ENCODE measurements at regions of chr22 and their contacts with region 1.

Region 1: DNA sequence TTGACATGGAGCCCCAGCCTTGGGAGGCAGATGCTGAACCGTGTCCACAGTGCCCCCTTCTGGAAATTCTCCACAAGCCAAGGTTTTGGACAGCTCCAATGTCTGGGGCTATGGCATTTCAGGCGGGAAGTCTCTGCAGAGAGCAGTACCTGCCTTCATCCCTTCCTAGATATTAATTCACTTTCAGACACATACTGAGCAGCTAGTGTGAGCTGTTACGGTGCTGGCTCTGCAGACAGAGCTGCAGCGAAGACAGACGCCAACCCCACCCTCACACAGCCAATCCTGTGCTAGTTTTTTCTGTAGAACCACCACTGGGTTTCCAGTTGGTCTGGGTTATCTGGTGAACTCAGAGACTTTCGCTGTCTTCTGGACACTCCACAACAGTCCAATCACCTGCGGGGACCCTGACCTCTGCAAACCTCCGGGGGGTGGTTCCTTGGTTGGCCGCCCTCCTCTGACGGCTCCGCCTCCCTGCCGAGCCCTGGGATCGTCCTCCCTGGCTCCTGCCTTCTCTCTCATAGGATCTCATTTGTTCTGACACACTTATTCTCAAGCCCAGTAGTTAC is 9.1 kb downstream of the LMF2 start:
- DNase-seq: peak; percentile 80
- ATAC-seq: peak; percentile 94
- H3K4me3 ChIP-seq: no peak overlapping the region
- H3K4me3 Mint-ChIP-seq: no peak overlapping the region
- H3K27ac ChIP-seq: no peak overlapping the region
- H3K27ac Mint-ChIP-seq: no peak overlapping the region
- H3K4me1 ChIP-seq: peaks cover 3 to 10% of the 10 kb centered on the region in 2 donors
- H3K4me1 Mint-ChIP-seq: peaks cover 4% of the 10 kb centered on the region
- H3K27me3 ChIP-seq: no peaks in the 10 kb centered on the region
- H3K27me3 Mint-ChIP-seq: no peaks in the 10 kb centered on the region
- CTCF ChIP-seq: peak; percentile 73

Region 2: GRCh38 chr22:50236731-50237409 is 261.5 kb before region 1 on chr22:
- CTCF ChIA-PET with region 1: interaction called, 21 read pairs
- POLR2A ChIA-PET with region 1: interaction called, 11 read pairs
- intact Hi-C with region 1: loop called (anchors 1 kb)
- DNase-seq: no peak
- ATAC-seq: no peak
- H3K4me3 ChIP-seq: no peak overlapping the region
- H3K4me3 Mint-ChIP-seq: no peak overlapping the region
- H3K27ac ChIP-seq: no peak overlapping the region
- H3K27ac Mint-ChIP-seq: no peak overlapping the region
- H3K4me1 ChIP-seq: peaks cover 6 to 11% of the 10 kb centered on the region in 2 donors
- H3K4me1 Mint-ChIP-seq: peaks cover 18% of the 10 kb centered on the region
- H3K27me3 ChIP-seq: no peaks in the 10 kb centered on the region
- H3K27me3 Mint-ChIP-seq: no peaks in the 10 kb centered on the region
- CTCF ChIP-seq: peak; percentile 51

Region 3: GRCh38 chr22:50250555-50251476 is 247.6 kb before region 1 on chr22 and contains the start of gene HDAC10:
- CTCF ChIA-PET with region 1: interaction called, 26 read pairs
- POLR2A ChIA-PET with region 1: interaction called, 3 read pairs
- intact Hi-C with region 1: loop called (anchors 1 kb)
- DNase-seq: peak; percentile 85
- ATAC-seq: peak; percentile 84
- H3K4me3 ChIP-seq: peak within 1 kb of the TSS; percentile 56 to 81 (median 79)
- H3K4me3 Mint-ChIP-seq: peak within 1 kb of the TSS; percentile 86
- H3K27ac ChIP-seq: peak within 1 kb of the TSS; percentile 41 to 49
- H3K27ac Mint-ChIP-seq: peak within 1 kb of the TSS; percentile 76
- H3K4me1 ChIP-seq: peaks cover 15 to 44% of the 10 kb centered on the region in 2 donors
- H3K4me1 Mint-ChIP-seq: peaks cover 24% of the 10 kb centered on the region
- H3K27me3 ChIP-seq: no peaks in the 10 kb centered on the region
- H3K27me3 Mint-ChIP-seq: no peaks in the 10 kb centered on the region
- CTCF ChIP-seq: no peak
- total RNA-seq, gene HDAC10: 120 and 136 TPM in 2 replicates

Region 4: GRCh38 chr22:50444663-50445062 is 53.7 kb before region 1 on chr22:
- CTCF ChIA-PET with region 1: interaction called, 35 read pairs
- POLR2A ChIA-PET with region 1: interaction called, 3 read pairs
- intact Hi-C with region 1: no loop called
- DNase-seq: no peak
- ATAC-seq: no peak
- H3K4me3 ChIP-seq: no peak overlapping the region
- H3K4me3 Mint-ChIP-seq: no peak overlapping the region
- H3K27ac ChIP-seq: peak overlapping the region in 1 of 2 donors; percentile 68
- H3K27ac Mint-ChIP-seq: peak overlapping the region; percentile 75
- H3K4me1 ChIP-seq: peaks cover 10 to 20% of the 10 kb centered on the region in 2 donors
- H3K4me1 Mint-ChIP-seq: peaks cover 21% of the 10 kb centered on the region
- H3K27me3 ChIP-seq: no peaks in the 10 kb centered on the region
- H3K27me3 Mint-ChIP-seq: no peaks in the 10 kb centered on the region
- CTCF ChIP-seq: no peak

Region 5: DNA sequence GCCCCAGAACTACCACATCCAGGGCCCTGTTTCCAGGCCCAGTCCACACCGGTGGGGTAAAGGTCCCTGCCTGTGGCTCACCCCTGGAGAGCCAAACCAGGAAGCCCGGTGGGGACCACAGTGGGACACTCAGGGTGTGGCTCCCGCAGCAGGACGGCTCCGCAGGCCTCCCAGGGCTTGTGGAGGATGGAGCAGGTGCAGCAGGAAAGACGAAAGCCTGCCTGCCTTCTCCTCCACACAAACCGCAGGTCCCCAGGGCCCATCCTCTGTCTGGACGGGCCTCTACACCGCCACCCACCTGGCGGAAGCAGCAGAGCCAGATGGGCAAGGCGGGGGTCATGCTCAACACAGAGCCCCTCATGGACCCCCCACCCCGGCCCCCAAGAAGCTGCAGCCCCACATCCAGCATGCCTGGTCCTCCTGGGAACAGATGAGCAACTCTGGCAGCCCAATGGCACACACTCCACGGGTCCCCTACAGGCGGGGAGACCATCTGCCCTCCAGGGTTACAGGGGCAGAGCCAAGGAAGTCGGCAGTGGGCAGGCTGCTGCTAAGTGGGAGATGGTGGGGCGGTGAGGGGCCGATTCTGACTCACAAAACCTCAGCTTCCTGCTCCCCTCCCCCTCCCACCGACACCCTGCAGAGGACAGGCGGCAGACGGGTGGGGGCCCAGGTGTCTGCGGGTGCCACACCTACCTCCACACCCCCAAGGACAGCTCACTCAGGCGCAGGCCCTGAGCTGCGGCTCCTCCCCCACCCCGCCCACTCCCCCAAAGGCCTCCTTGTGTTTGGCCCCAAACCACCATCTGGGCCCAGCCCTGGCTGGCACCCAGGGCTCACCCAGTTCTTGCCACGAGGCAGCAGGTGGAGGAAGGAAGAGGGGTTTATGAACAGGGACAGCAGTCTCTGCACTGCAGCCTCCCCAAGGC is 28.8 kb before region 1 on chr22:
- CTCF ChIA-PET with region 1: interaction called, 16 read pairs
- POLR2A ChIA-PET with region 1: interaction called, 4 read pairs
- intact Hi-C with region 1: loop called (anchors 1 kb)
- DNase-seq: peak; percentile 96
- ATAC-seq: peak; percentile 79
- H3K4me3 ChIP-seq: peak overlapping the region in 4 of 5 experiments; percentile 1 to 39 (median 29)
- H3K4me3 Mint-ChIP-seq: peak overlapping the region; percentile 83
- H3K27ac ChIP-seq: peak overlapping the region; percentile 69 to 90
- H3K27ac Mint-ChIP-seq: peak overlapping the region; percentile 96
- H3K4me1 ChIP-seq: peaks cover 60 to 66% of the 10 kb centered on the region in 2 donors
- H3K4me1 Mint-ChIP-seq: peaks cover 69% of the 10 kb centered on the region
- H3K27me3 ChIP-seq: no peaks in the 10 kb centered on the region
- H3K27me3 Mint-ChIP-seq: no peaks in the 10 kb centered on the region
- CTCF ChIP-seq: peak; percentile 31